HepG2 (cell line): ENCODE measurements at regions of chr2 and their contacts with region 1.

Region 1: DNA sequence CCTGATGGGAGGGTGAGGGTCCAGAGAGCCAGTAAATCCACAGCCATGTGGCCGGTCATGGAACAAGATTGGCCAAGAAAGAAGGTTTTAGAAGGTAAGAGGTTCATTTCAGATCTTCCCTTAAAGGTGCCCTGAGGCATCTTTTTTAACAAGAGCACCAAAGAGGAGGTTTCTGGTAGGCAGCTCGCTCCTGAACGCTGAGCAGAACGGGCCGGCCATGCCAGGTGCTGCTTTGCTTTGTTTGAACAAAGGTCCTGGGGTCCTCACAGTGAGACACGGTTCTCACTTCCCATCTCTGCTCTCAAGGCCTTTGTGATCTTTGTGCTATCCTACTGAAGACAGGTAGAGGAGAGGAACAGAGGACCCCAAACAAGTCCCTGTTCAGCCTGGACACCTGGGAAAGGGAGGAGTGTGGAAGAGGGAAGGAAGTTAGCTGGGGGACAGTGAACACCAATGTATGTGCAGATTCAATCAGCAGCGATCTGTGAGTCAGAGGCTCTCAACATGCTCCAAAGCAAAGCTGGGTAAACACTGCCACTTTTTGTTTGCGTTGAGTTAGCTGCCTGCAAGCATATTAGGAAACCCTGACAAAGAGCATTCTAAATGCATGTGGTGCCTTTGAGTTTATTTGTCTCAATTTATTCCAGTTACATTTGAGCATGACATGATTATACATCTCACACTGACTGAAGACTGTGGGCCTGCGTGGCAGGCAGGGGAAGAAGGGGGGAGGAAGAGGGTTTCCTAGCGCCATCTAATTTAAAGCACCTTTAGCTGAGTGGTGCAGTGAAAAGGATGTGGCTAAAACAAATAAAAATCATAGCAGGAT is 102.4 kb downstream of the ASB1 start:
- DNase-seq: peak; percentile 95
- ATAC-seq: peak; percentile 98
- H3K4me3 ChIP-seq: peak overlapping the region; percentile 9 to 49 (median 16); a peak in 4 of 6 replicates
- H3K27ac ChIP-seq: peak overlapping the region; percentile 43
- H3K4me1 ChIP-seq: peaks cover 21% of the 10 kb centered on the region
- H3K27me3 ChIP-seq: no peaks in the 10 kb centered on the region
- CTCF ChIP-seq: peak; percentile 65
- EP300 ChIP-seq: peak in 1 of 2 experiments; percentile 62; a peak in 2 of 4 replicates
- POLR2A ChIP-seq: no peak
- RAD21 ChIP-seq: peak; percentile 47

Region 2: GRCh38 chr2:238513346-238513745 is 15.8 kb before region 1 on chr2:
- CTCF ChIA-PET with region 1: interaction called, 4 read pairs
- POLR2A ChIA-PET with region 1: interaction called, 39 read pairs
- in situ Hi-C with region 1: no loop called
- intact Hi-C with region 1: no loop called
- DNase-seq: peak; percentile 68
- ATAC-seq: peak; percentile 77
- H3K4me3 ChIP-seq: no peak overlapping the region
- H3K27ac ChIP-seq: no peak overlapping the region
- H3K4me1 ChIP-seq: peaks cover 38% of the 10 kb centered on the region
- H3K27me3 ChIP-seq: no peaks in the 10 kb centered on the region
- CTCF ChIP-seq: peak; percentile 72
- EP300 ChIP-seq: no peak
- POLR2A ChIP-seq: no peak
- RAD21 ChIP-seq: peak; percentile 77; the same call in 1 of the 2 replicates